Activated T-helper 1 cell treated with anti-CD3 and anti-CD28 coated beads, Interleukin-12 subunit alpha, Interleukin-12 subunit beta, Interleukin-2, Interleukin-4 antibody, amounts not matched to agents 30 ng/mL and 10 ng/mL and 1 ng/mL, durations not matched to agents 14 hours and 24 hours and 36 hours (primary cell): ENCODE measurements at regions of chr1 and their contacts with region 1.

Region 1: GRCh38 chr1:228212966-228213844 is 5.4 kb downstream of the OBSCN start:
- DNase-seq: peak; percentile 80
- H3K4me3 Mint-ChIP-seq: peak overlapping the region; percentile 89
- H3K27ac Mint-ChIP-seq: peak overlapping the region; percentile 93
- H3K4me1 Mint-ChIP-seq: no peaks in the 10 kb centered on the region
- H3K27me3 Mint-ChIP-seq: peaks cover 4% of the 10 kb centered on the region

Region 2: DNA sequence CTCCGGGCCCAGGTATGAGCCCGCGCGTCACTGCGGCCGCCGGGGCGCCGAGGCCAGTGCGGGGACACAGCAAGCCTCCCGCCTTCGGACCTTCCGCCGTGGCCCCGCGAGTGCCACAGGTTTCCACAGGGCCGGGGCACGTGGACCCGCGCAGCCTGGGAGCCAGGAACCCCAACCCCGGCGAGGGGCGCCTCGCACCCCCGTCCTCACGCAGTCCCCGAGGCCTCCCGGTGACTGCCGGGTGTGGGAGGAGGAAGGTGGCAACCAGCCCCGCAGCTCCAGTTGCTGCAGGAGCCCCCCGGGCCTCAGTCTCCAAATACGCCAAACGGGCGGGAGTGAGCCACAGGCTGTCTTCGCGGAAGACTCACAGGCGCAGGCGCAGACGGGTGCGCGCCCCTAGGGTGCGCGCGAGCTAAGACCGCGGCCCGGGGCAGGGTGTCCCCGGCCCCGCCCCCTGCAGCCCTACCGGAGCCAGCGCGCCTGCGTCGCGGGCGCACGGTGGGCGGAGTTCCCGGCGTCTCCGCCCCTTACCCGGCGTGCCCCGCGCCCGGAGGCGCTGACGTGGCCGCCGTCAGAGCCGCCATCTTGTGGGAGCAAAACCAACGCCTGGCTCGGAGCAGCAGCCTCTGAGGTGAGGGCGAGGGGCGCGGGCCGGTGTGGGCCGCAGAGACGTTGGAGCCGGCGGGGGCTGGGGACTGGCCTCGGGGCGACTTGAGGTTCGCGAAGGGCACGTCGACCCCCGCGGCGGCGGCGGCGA is 130.9 kb before region 1 on chr1 and contains the start of gene ARF1:
- intact Hi-C with region 1: loop called (anchors 1 kb)
- DNase-seq: peak; percentile 91
- H3K4me3 Mint-ChIP-seq: peak within 1 kb of the TSS; percentile 97
- H3K27ac Mint-ChIP-seq: peak within 1 kb of the TSS; percentile 91
- H3K4me1 Mint-ChIP-seq: peaks cover 37% of the 10 kb centered on the region
- H3K27me3 Mint-ChIP-seq: no peaks in the 10 kb centered on the region
- total RNA-seq, gene ARF1: 404 TPM in 2 replicates

Region 3: DNA sequence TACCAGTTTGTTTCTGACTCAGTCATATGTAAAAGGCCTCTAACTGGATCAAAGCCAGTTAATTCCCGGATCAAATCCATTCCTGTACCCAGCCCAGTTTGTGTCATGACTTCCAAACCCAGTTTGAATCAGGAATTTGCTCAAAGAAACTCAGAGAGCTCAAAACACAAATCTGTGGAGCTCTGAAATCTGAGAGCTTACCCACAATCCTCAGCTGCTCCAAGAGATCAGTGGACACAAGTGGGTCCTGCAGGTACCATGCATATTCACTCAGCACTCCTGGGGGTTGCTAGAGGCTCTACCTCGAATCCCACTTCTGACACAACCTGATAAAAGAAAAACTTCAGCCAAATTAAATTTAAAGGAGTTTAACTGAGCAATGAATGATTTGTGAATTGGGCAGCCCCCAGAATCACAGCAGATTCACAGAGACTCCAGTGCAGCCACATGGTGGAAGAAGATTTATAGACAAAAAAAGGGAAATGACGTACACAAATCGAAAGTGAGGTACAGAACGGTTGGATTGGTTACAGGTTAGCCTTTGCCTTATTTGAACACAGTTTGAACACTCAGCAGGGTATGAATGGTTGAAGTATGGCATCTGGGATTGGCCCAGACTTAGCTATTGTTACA is 92.2 kb before region 1 on chr1:
- intact Hi-C with region 1: no loop called
- DNase-seq: no peak
- H3K4me3 Mint-ChIP-seq: no peak overlapping the region
- H3K27ac Mint-ChIP-seq: no peak overlapping the region
- H3K4me1 Mint-ChIP-seq: peaks cover 7% of the 10 kb centered on the region
- H3K27me3 Mint-ChIP-seq: peaks cover 2% of the 10 kb centered on the region

Region 4: GRCh38 chr1:228139944-228140656 is 73.1 kb before region 1 on chr1 and contains the start of gene GUK1:
- intact Hi-C with region 1: loop called (anchors 1 kb)
- DNase-seq: peak; percentile 100
- H3K4me3 Mint-ChIP-seq: peak within 1 kb of the TSS; percentile 100
- H3K27ac Mint-ChIP-seq: peak within 1 kb of the TSS; percentile 97
- H3K4me1 Mint-ChIP-seq: peaks cover 22% of the 10 kb centered on the region
- H3K27me3 Mint-ChIP-seq: peaks cover 21% of the 10 kb centered on the region
- total RNA-seq, gene GUK1: 201 and 202 TPM in 2 replicates

Region 5: DNA sequence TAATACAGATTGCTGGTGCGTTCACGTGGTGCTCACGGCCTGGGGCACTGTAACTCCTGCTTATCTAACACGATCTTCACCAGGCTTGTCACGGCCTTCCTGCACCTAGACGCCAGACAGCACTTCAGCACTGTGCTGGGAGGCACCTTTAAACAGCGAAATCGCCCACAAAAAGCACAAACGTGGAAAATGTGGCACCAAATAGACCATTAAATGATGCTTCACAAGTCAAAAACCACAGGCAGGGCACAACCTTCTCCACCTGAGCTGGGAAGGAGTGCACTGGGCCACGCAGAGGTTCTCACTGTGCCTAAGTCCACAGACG is 27.6 kb before region 1 on chr1:
- intact Hi-C with region 1: no loop called
- DNase-seq: no peak
- H3K4me3 Mint-ChIP-seq: no peak overlapping the region
- H3K27ac Mint-ChIP-seq: no peak overlapping the region
- H3K4me1 Mint-ChIP-seq: no peaks in the 10 kb centered on the region
- H3K27me3 Mint-ChIP-seq: no peaks in the 10 kb centered on the region

Region 6: DNA sequence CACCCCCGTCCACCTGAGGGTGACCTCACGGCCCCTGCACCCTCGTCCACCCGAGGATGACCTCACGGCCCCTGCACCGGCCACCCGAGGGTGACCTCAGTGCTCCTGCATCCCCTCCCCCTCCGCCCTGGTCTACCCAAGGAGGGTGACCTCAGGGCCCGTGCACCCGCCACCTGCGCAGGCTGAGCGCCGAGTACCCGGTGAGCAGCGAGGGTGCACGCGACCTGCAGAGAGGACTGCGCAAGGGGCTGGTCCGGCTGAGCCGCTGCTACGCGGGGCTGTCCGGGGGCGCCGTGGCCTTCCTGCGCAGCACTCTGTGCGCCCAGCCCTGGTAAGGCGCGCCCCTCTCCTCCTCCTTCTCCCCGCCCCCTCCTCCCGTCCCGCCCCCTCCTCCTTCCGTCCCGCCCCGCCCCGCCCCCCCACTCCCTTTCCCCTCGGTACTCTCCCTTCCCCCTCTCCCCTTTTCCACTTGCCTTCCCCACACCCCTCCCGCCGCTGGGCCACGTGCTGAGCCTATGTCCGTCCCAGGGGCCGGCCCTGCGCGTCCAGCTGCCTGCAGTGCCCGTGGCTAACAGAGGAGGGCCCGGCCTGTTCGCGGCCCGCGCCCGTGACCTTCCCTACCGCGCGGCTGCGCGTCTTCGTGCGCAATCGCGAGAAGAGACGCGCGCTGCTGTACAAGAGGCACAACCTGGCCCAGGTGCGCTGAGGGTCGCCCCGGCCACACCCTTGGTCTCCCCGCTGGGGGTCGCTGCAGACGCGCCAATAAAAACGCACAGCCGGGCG is 165.1 kb after region 1 on chr1:
- intact Hi-C with region 1: loop called (anchors 2 kb)
- DNase-seq: peak; percentile 41
- H3K4me3 Mint-ChIP-seq: peak overlapping the region; percentile 79
- H3K27ac Mint-ChIP-seq: no peak overlapping the region
- H3K4me1 Mint-ChIP-seq: no peaks in the 10 kb centered on the region
- H3K27me3 Mint-ChIP-seq: peaks cover 25% of the 10 kb centered on the region

Region 7: GRCh38 chr1:228500901-228501871 is 288.0 kb after region 1 on chr1:
- intact Hi-C with region 1: loop called (anchors 1 kb)
- DNase-seq: peak; percentile 77
- H3K4me3 Mint-ChIP-seq: peak overlapping the region; percentile 74
- H3K27ac Mint-ChIP-seq: no peak overlapping the region
- H3K4me1 Mint-ChIP-seq: peaks cover 26% of the 10 kb centered on the region
- H3K27me3 Mint-ChIP-seq: peaks cover 7% of the 10 kb centered on the region